ENCODE measurements at regions of chr3 and their contacts with region 1.

Region 1: GRCh38 chr3:30611613-30612436 is 5.4 kb downstream of the TGFBR2 start:
- H3K4me3 Mint-ChIP-seq: peak overlapping the region; percentile 48
- H3K27ac Mint-ChIP-seq: peak overlapping the region; percentile 40
- H3K4me1 Mint-ChIP-seq: peaks cover 75% of the 10 kb centered on the region
- H3K27me3 Mint-ChIP-seq: no peaks in the 10 kb centered on the region

Region 2: GRCh38 chr3:30319713-30320112 is 292.1 kb before region 1 on chr3:
- intact Hi-C with region 1: no loop called
- H3K4me3 Mint-ChIP-seq: no peak overlapping the region
- H3K27ac Mint-ChIP-seq: no peak overlapping the region
- H3K4me1 Mint-ChIP-seq: peaks cover 13% of the 10 kb centered on the region
- H3K27me3 Mint-ChIP-seq: no peaks in the 10 kb centered on the region

Region 3: DNA sequence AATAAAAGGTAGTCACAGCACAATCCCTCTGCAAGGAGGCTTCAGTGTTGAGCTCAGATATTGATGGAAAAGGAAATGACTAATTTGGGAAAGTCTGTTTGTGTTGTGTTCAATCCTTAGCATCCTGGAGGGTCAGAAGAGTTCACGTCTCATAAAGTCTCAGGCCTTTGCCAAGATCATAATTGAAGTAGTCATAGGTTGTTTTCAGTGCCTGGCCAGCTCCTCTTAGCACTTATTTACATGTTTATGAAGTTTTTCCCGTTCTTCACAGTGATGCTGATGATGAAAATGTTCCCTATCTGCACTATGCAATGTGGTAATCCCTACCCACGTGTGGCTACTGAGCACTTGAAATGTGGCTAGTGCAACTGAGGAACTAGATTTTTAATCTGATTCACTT is 67.0 kb before region 1 on chr3:
- intact Hi-C with region 1: no loop called
- H3K4me3 Mint-ChIP-seq: no peak overlapping the region
- H3K27ac Mint-ChIP-seq: no peak overlapping the region
- H3K4me1 Mint-ChIP-seq: peaks cover 17% of the 10 kb centered on the region
- H3K27me3 Mint-ChIP-seq: no peaks in the 10 kb centered on the region

Region 4: GRCh38 chr3:30578479-30578878 is 33.3 kb before region 1 on chr3:
- intact Hi-C with region 1: no loop called
- H3K4me3 Mint-ChIP-seq: no peak overlapping the region
- H3K27ac Mint-ChIP-seq: peak overlapping the region; percentile 66
- H3K4me1 Mint-ChIP-seq: peaks cover 21% of the 10 kb centered on the region
- H3K27me3 Mint-ChIP-seq: no peaks in the 10 kb centered on the region

Region 5: DNA sequence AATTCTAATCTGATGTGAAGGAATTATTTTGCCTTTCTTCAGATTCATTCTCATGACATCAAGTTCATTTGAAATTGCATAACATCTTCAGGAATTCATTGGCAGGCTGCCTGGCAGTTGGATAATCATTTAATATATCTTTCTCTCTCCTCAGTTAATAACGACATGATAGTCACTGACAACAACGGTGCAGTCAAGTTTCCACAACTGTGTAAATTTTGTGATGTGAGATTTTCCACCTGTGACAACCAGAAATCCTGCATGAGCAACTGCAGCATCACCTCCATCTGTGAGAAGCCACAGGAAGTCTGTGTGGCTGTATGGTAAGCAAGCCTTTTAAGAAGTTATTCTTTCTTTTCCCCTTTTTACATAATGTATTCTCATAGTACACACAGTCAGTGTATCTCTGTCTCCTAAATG is 32.8 kb after region 1 on chr3:
- intact Hi-C with region 1: loop called (anchors 5 kb)
- H3K4me3 Mint-ChIP-seq: no peak overlapping the region
- H3K27ac Mint-ChIP-seq: peak overlapping the region; percentile 48
- H3K4me1 Mint-ChIP-seq: peaks cover 82% of the 10 kb centered on the region
- H3K27me3 Mint-ChIP-seq: no peaks in the 10 kb centered on the region

Region 6: DNA sequence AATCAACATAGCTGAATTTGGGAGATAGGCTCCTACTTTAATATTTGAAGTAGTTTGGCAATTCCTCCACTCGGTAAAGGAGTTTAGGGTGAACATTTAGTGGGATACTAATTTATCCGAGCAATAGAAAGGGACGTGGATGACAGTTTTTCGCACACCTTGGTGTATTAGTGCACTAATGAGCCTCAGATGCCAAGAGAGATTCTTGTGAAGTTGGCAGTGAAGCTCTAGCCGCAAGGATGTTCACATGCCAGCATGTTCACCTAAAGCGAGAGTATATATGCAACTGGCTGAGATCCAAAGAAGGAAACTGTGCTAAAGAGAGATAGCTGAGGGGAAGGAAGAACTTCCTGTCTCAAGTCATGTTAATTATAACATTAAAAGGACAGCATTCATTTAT is 53.1 kb after region 1 on chr3:
- intact Hi-C with region 1: no loop called
- H3K4me3 Mint-ChIP-seq: peak overlapping the region; percentile 13
- H3K27ac Mint-ChIP-seq: peak overlapping the region; percentile 68
- H3K4me1 Mint-ChIP-seq: peaks cover 42% of the 10 kb centered on the region
- H3K27me3 Mint-ChIP-seq: no peaks in the 10 kb centered on the region